ENCODE measurements at regions of chr12 and their contacts with region 1.

Region 1: GRCh38 chr12:92649511-92650227 is 53.1 kb upstream of the PLEKHG7 start:
- DNase-seq: peak; percentile 8 to 70 (median 58)
- ATAC-seq: peak; percentile 96
- H3K4me3 ChIP-seq: no peak overlapping the region
- H3K4me3 Mint-ChIP-seq: peak overlapping the region in 1 of 10 donors; percentile 21
- H3K27ac ChIP-seq: no peak overlapping the region
- H3K27ac Mint-ChIP-seq: peak overlapping the region in 6 of 9 donors; percentile 7 to 79 (median 20)
- H3K4me1 ChIP-seq: no peaks in the 10 kb centered on the region
- H3K4me1 Mint-ChIP-seq: peaks cover 4 to 11% (median 6%) of the 10 kb centered on the region in 7 donors
- H3K27me3 ChIP-seq: no peaks in the 10 kb centered on the region
- H3K27me3 Mint-ChIP-seq: no peaks in the 10 kb centered on the region

Region 2: GRCh38 chr12:90940872-90941499 is 1708.7 kb before region 1 on chr12:
- CTCF ChIA-PET with region 1: no interaction called
- POLR2A ChIA-PET with region 1: no interaction called
- intact Hi-C with region 1: loop called in 1 of 2 experiments (anchors 2 kb)
- DNase-seq: peak in 1 of 9 donors; percentile 14
- ATAC-seq: no peak
- H3K4me3 ChIP-seq: no peak overlapping the region
- H3K4me3 Mint-ChIP-seq: no peak overlapping the region
- H3K27ac ChIP-seq: no peak overlapping the region
- H3K27ac Mint-ChIP-seq: no peak overlapping the region
- H3K4me1 ChIP-seq: no peaks in the 10 kb centered on the region
- H3K4me1 Mint-ChIP-seq: peaks cover 0 to 2% (median 0%) of the 10 kb centered on the region in 7 donors
- H3K27me3 ChIP-seq: no peaks in the 10 kb centered on the region
- H3K27me3 Mint-ChIP-seq: peaks cover 5 to 13% (median 5%) of the 10 kb centered on the region in 5 donors

Region 3: GRCh38 chr12:91361864-91362263 is 1287.8 kb before region 1 on chr12:
- CTCF ChIA-PET with region 1: interaction called, 20 read pairs
- POLR2A ChIA-PET with region 1: no interaction called
- intact Hi-C with region 1: loop called (anchors 1 kb)
- DNase-seq: peak in 7 of 9 donors; percentile 15 to 57 (median 46)
- ATAC-seq: peak; percentile 63
- H3K4me3 ChIP-seq: no peak overlapping the region
- H3K4me3 Mint-ChIP-seq: peak overlapping the region in 1 of 10 donors; percentile 11
- H3K27ac ChIP-seq: no peak overlapping the region
- H3K27ac Mint-ChIP-seq: peak overlapping the region in 1 of 9 donors; percentile 41
- H3K4me1 ChIP-seq: no peaks in the 10 kb centered on the region
- H3K4me1 Mint-ChIP-seq: peaks cover 0 to 4% (median 3%) of the 10 kb centered on the region in 7 donors
- H3K27me3 ChIP-seq: no peaks in the 10 kb centered on the region
- H3K27me3 Mint-ChIP-seq: peaks cover 0 to 16% (median 0%) of the 10 kb centered on the region in 5 donors

Region 4: GRCh38 chr12:91811481-91812287 is 838.0 kb before region 1 on chr12:
- CTCF ChIA-PET with region 1: no interaction called
- POLR2A ChIA-PET with region 1: no interaction called
- intact Hi-C with region 1: loop called in 1 of 2 experiments (anchors 5 kb)
- DNase-seq: peak; percentile 64 to 79 (median 70)
- ATAC-seq: peak; percentile 90
- H3K4me3 ChIP-seq: peak overlapping the region; percentile 37
- H3K4me3 Mint-ChIP-seq: peak overlapping the region in 9 of 10 donors; percentile 31 to 80 (median 52)
- H3K27ac ChIP-seq: peak overlapping the region; percentile 22
- H3K27ac Mint-ChIP-seq: peak overlapping the region in 8 of 9 donors; percentile 81 to 97 (median 86)
- H3K4me1 ChIP-seq: peaks cover 0 to 15% of the 10 kb centered on the region in 2 donors
- H3K4me1 Mint-ChIP-seq: peaks cover 10 to 48% (median 35%) of the 10 kb centered on the region in 7 donors
- H3K27me3 ChIP-seq: no peaks in the 10 kb centered on the region
- H3K27me3 Mint-ChIP-seq: no peaks in the 10 kb centered on the region

Region 5: GRCh38 chr12:92158796-92159439 is 490.8 kb before region 1 on chr12:
- CTCF ChIA-PET with region 1: no interaction called
- POLR2A ChIA-PET with region 1: no interaction called
- intact Hi-C with region 1: loop called in 1 of 2 experiments (anchors 5 kb)
- DNase-seq: peak in 4 of 9 donors; percentile 32 to 58 (median 48)
- ATAC-seq: peak; percentile 84
- H3K4me3 ChIP-seq: peak overlapping the region; percentile 15
- H3K4me3 Mint-ChIP-seq: peak overlapping the region; percentile 49 to 87 (median 76)
- H3K27ac ChIP-seq: peak overlapping the region; percentile 70
- H3K27ac Mint-ChIP-seq: peak overlapping the region; percentile 65 to 99 (median 95)
- H3K4me1 ChIP-seq: peaks cover 0 to 46% of the 10 kb centered on the region in 2 donors
- H3K4me1 Mint-ChIP-seq: peaks cover 28 to 92% (median 78%) of the 10 kb centered on the region in 7 donors
- H3K27me3 ChIP-seq: no peaks in the 10 kb centered on the region
- H3K27me3 Mint-ChIP-seq: no peaks in the 10 kb centered on the region

Region 6: GRCh38 chr12:92593734-92594402 is 55.8 kb before region 1 on chr12:
- CTCF ChIA-PET with region 1: interaction called, 4 read pairs
- POLR2A ChIA-PET with region 1: no interaction called
- intact Hi-C with region 1: loop called (anchors 1 to 5 kb)
- DNase-seq: peak; percentile 51 to 97 (median 92)
- ATAC-seq: peak; percentile 95
- H3K4me3 ChIP-seq: peak overlapping the region; percentile 16
- H3K4me3 Mint-ChIP-seq: peak overlapping the region; percentile 22 to 83 (median 72)
- H3K27ac ChIP-seq: peak overlapping the region; percentile 86
- H3K27ac Mint-ChIP-seq: peak overlapping the region; percentile 90 to 100 (median 98)
- H3K4me1 ChIP-seq: peaks cover 27 to 30% of the 10 kb centered on the region in 2 donors
- H3K4me1 Mint-ChIP-seq: peaks cover 23 to 74% (median 44%) of the 10 kb centered on the region in 7 donors
- H3K27me3 ChIP-seq: no peaks in the 10 kb centered on the region
- H3K27me3 Mint-ChIP-seq: no peaks in the 10 kb centered on the region